ENCODE measurements at regions of chr2 and their contacts with region 1.

Region 1: DNA sequence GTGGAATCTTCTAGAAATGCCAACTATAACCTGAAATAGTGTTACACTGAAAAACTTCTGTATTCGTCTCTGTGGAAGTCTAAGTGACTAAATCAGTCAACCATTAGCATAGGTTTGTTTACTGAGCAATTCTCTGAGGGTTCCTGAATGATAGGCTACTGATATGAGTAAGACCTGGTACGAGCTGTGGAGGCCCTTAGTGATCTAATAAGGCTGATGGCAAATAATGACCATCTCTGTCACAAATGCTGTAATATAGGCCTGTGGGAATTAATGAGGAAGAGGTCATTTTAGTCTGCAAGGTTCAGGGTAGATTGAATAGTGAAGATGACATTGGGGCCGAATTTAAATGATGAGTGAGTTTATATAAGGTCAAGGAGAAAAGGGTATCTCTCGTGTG is 82.5 kb downstream of the MGAT5 start:
- DNase-seq: no peak
- ATAC-seq: no peak
- H3K4me3 ChIP-seq: no peak overlapping the region
- H3K27ac ChIP-seq: no peak overlapping the region
- H3K4me1 ChIP-seq: peaks cover 0 to 65% (median 35%) of the 10 kb centered on the region in 9 donors
- H3K27me3 ChIP-seq: no peaks in the 10 kb centered on the region
- CTCF ChIP-seq: no peak

Region 2: GRCh38 chr2:134379293-134379692 is 42.9 kb after region 1 on chr2:
- intact Hi-C with region 1: no loop called
- DNase-seq: no peak
- ATAC-seq: peak in 7 of 8 donors; percentile 31 to 58 (median 42)
- H3K4me3 ChIP-seq: no peak overlapping the region
- H3K27ac ChIP-seq: peak overlapping the region in 7 of 10 donors; percentile 3 to 54 (median 28)
- H3K4me1 ChIP-seq: peaks cover 0 to 49% (median 22%) of the 10 kb centered on the region in 9 donors
- H3K27me3 ChIP-seq: no peaks in the 10 kb centered on the region
- CTCF ChIP-seq: no peak

Region 3: DNA sequence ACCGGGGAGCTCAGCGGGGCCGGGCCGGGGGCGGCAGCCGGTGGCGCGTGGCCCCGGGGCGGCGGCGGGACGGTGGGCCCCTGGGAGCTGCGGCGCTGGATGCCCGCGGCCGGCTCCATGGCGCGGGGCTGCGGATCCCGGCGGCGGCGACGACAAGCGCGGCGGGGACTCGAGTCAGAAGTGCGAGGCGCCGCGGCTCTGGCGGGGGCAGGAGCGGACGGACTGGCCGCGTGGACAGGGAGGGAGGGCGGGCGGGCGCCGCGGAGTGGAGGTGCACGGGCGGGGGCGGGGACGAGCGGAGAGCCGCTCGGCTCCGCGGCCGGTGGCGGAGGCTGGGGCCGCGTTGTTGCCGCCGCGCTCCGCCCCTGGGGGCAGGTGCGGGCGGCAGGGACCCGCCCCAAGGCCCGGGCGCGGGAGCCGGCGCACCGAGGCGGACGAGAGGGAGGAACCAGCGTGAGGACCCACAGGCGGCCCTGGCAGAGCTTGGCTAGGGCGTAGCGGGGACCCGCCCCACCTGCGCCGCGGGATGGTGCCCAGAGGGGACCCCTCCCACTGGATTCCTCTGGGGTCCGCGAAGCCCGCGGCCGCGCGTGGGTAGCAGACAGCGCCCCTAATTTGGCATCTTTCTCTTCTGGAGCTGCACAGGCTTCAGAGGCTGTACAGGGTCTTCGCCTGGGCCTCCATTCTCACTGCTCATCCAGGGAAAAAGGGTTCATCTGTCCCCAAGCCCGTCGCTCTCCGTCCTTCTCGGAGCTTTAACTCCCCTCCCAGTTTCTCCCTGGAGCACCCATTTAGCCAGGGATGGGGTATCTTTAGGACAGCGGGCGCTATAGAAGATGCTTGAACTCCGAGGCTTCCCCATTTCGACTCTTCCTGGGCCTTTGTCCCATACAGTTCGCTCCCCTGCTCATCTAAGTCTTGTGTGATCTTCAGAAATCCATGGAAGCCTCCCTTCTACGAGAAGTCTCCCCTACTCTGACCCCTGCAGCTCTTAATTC is 382.8 kb after region 1 on chr2 and contains the start of gene TMEM163:
- intact Hi-C with region 1: loop called in 1 of 10 experiments (anchors 5 kb)
- DNase-seq: peak in 1 of 2 donors; percentile 26
- ATAC-seq: peak in 4 of 8 donors; percentile 9 to 68 (median 30)
- H3K4me3 ChIP-seq: peak within 1 kb of the TSS; percentile 36 to 70 (median 52)
- H3K27ac ChIP-seq: peak within 1 kb of the TSS in 3 of 10 donors; percentile 15 to 52 (median 35)
- H3K4me1 ChIP-seq: peaks cover 0 to 15% (median 13%) of the 10 kb centered on the region in 9 donors
- H3K27me3 ChIP-seq: peaks cover 11 to 90% (median 70%) of the 10 kb centered on the region in 7 donors
- CTCF ChIP-seq: no peak
- total RNA-seq, gene TMEM163: 0.16 to 0.80 (median 0.35) TPM